Activated CD8-positive, alpha-beta T cell treated with anti-CD3 and anti-CD28 coated beads for 36 hours (primary cell): ENCODE measurements at regions of chr17 and their contacts with region 1.

Region 1: GRCh38 chr17:64025732-64026294 is 5.4 kb upstream of the ICAM2 start:
- DNase-seq: peak; percentile 96
- ATAC-seq: peak; percentile 77
- H3K4me3 Mint-ChIP-seq: peak overlapping the region; percentile 65
- H3K27ac Mint-ChIP-seq: peak overlapping the region; percentile 85
- H3K4me1 Mint-ChIP-seq: peaks cover 58% of the 10 kb centered on the region
- H3K27me3 Mint-ChIP-seq: no peaks in the 10 kb centered on the region
- CTCF ChIP-seq: peak; percentile 97

Region 2: DNA sequence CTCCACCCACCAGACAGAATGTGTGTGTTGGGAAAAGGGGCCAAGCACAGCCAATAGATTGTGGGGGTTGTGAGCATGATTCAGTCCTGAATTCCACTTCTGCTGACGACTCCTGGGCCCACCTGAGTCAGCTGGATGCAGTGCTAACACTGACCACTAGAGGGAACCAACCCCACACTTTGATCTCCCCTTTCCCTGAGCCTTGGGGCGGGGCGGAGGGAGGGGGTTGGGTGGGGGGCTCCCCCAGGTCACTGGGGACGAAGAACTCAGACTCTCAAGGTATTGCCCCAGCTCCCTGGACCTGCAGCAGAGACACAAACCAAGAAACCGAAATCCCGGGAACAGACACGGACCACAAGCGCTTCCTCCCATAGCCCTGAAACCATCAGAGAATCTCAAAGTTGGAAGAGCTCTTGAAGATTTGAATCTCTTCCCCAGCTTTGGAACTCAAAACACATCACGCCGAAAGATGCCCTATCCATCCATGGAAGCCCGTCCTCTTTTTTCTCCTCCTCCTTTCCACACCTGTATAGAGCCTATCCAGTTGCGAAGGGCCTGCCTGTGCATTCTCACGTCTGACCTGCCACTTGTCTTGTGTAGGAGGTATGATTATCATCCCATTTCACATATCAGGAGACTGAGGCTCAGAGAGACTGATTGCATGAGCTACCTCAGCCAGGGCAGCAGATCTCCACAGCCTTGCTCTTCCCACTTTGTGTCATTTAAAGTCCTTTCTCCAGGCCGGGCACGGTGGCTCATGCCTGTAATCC is 114.0 kb before region 1 on chr17:
- CTCF ChIA-PET with region 1: interaction called, 21 read pairs
- POLR2A ChIA-PET with region 1: no interaction called
- intact Hi-C with region 1: loop called (anchors 5 kb)
- DNase-seq: peak; percentile 80
- ATAC-seq: peak; percentile 95
- H3K4me3 Mint-ChIP-seq: no peak overlapping the region
- H3K27ac Mint-ChIP-seq: no peak overlapping the region
- H3K4me1 Mint-ChIP-seq: no peaks in the 10 kb centered on the region
- H3K27me3 Mint-ChIP-seq: no peaks in the 10 kb centered on the region
- CTCF ChIP-seq: peak; percentile 88

Region 3: GRCh38 chr17:63993368-63993985 is 32.3 kb before region 1 on chr17:
- CTCF ChIA-PET with region 1: interaction called, 15 read pairs
- POLR2A ChIA-PET with region 1: interaction called, 4 read pairs
- intact Hi-C with region 1: no loop called
- DNase-seq: no peak
- ATAC-seq: no peak
- H3K4me3 Mint-ChIP-seq: no peak overlapping the region
- H3K27ac Mint-ChIP-seq: peak overlapping the region; percentile 37
- H3K4me1 Mint-ChIP-seq: peaks cover 38% of the 10 kb centered on the region
- H3K27me3 Mint-ChIP-seq: no peaks in the 10 kb centered on the region
- CTCF ChIP-seq: no peak

Region 4: GRCh38 chr17:64056269-64057005 is 30.6 kb after region 1 on chr17:
- CTCF ChIA-PET with region 1: interaction called, 39 read pairs
- POLR2A ChIA-PET with region 1: no interaction called
- intact Hi-C with region 1: no loop called
- DNase-seq: no peak
- ATAC-seq: peak; percentile 32
- H3K4me3 Mint-ChIP-seq: no peak overlapping the region
- H3K27ac Mint-ChIP-seq: peak overlapping the region; percentile 71
- H3K4me1 Mint-ChIP-seq: peaks cover 38% of the 10 kb centered on the region
- H3K27me3 Mint-ChIP-seq: no peaks in the 10 kb centered on the region
- CTCF ChIP-seq: no peak

Region 5: GRCh38 chr17:64145757-64146417 is 120.1 kb after region 1 on chr17:
- CTCF ChIA-PET with region 1: interaction called, 419 read pairs
- POLR2A ChIA-PET with region 1: interaction called, 47 read pairs
- intact Hi-C with region 1: loop called (anchors 5 kb)
- DNase-seq: peak; percentile 98
- ATAC-seq: peak; percentile 96
- H3K4me3 Mint-ChIP-seq: no peak overlapping the region
- H3K27ac Mint-ChIP-seq: no peak overlapping the region
- H3K4me1 Mint-ChIP-seq: peaks cover 18% of the 10 kb centered on the region
- H3K27me3 Mint-ChIP-seq: no peaks in the 10 kb centered on the region
- CTCF ChIP-seq: no peak

Region 6: GRCh38 chr17:64315032-64315490 is 289.2 kb after region 1 on chr17:
- CTCF ChIA-PET with region 1: no interaction called
- POLR2A ChIA-PET with region 1: no interaction called
- intact Hi-C with region 1: no loop called
- DNase-seq: no peak
- ATAC-seq: no peak
- H3K4me3 Mint-ChIP-seq: no peak overlapping the region
- H3K27ac Mint-ChIP-seq: no peak overlapping the region
- H3K4me1 Mint-ChIP-seq: peaks cover 2% of the 10 kb centered on the region
- H3K27me3 Mint-ChIP-seq: no peaks in the 10 kb centered on the region
- CTCF ChIP-seq: no peak

Region 7: GRCh38 chr17:64506576-64507477 is 481.0 kb after region 1 on chr17 and contains the start of gene CEP95:
- CTCF ChIA-PET with region 1: no interaction called
- POLR2A ChIA-PET with region 1: no interaction called
- intact Hi-C with region 1: no loop called
- DNase-seq: peak; percentile 98
- ATAC-seq: peak; percentile 70
- H3K4me3 Mint-ChIP-seq: peak within 1 kb of the TSS; percentile 91
- H3K27ac Mint-ChIP-seq: peak within 1 kb of the TSS; percentile 99
- H3K4me1 Mint-ChIP-seq: peaks cover 53% of the 10 kb centered on the region
- H3K27me3 Mint-ChIP-seq: no peaks in the 10 kb centered on the region
- CTCF ChIP-seq: no peak
- total RNA-seq, gene CEP95: 45.2 to 45.7 TPM